Calu3 (cell line): ENCODE measurements at regions of chr3 and their contacts with region 1.

Region 1: DNA sequence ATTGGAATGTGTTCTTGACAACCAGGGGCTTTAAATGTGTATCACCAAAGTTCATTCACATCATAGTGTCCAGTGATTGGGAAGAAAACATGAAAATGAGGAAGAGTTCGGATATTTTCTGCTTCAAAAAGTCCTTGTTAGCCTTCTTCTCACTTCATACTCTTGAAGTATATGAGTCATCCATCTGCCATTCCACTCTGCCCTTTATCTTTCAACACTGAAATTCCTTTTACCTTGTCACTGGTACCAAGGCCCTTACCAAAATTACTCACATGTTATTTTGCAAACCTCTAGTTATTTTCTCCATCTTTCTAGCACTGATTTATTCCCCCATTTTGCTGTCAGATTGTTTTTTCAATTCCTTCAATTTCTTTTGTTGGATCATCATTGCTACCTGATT is 32.5 kb downstream of the OR5H15 start:
- DNase-seq: no peak
- H3K4me3 Mint-ChIP-seq: no peak overlapping the region
- H3K27ac Mint-ChIP-seq: no peak overlapping the region
- H3K4me1 Mint-ChIP-seq: no peaks in the 10 kb centered on the region
- H3K27me3 Mint-ChIP-seq: peaks cover 28% of the 10 kb centered on the region
- CTCF ChIP-seq: no peak

Region 2: GRCh38 chr3:98166396-98166795 is 32.6 kb before region 1 on chr3 and contains the start of gene OR5H15:
- CTCF ChIA-PET with region 1: no interaction called
- intact Hi-C with region 1: loop called (anchors 1 kb)
- DNase-seq: no peak
- H3K4me3 Mint-ChIP-seq: no peak within 1 kb of the TSS
- H3K27ac Mint-ChIP-seq: no peak within 1 kb of the TSS
- H3K4me1 Mint-ChIP-seq: no peaks in the 10 kb centered on the region
- H3K27me3 Mint-ChIP-seq: peaks cover 25% of the 10 kb centered on the region
- CTCF ChIP-seq: no peak
- total RNA-seq, gene OR5H15: not detected in 2 replicates

Region 3: DNA sequence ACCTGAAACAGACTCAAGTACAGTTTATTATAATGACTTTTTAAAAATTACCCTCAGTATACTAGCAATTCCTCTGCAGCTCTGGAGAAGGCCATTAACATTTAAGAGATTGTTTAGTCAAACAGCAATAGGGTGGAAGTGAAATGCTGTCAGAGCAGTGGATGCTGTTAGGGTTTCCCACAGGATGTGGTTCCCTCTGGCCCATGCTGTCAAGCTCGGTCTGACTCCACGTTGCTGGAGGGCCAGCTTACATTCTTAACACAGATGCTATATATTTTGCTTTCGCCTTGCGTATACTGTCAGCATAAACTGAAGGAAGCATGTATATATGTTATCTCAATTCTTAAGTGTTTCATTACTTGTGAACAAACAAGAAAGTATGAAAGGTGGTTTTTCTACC is 1208.2 kb after region 1 on chr3:
- CTCF ChIA-PET with region 1: no interaction called
- intact Hi-C with region 1: no loop called
- DNase-seq: no peak
- H3K4me3 Mint-ChIP-seq: no peak overlapping the region
- H3K27ac Mint-ChIP-seq: no peak overlapping the region
- H3K4me1 Mint-ChIP-seq: no peaks in the 10 kb centered on the region
- H3K27me3 Mint-ChIP-seq: no peaks in the 10 kb centered on the region
- CTCF ChIP-seq: no peak